Activated CD4-positive, alpha-beta T cell treated with anti-CD3 and anti-CD28 coated beads, Interleukin-2, amount 10 ng/mL, durations not matched to agents 24 days and 14 days (primary cell): ENCODE measurements at regions of chr11 and their contacts with region 1.

Region 1: GRCh38 chr11:103091801-103092524 is at the start of gene DCUN1D5:
- DNase-seq: peak; percentile 99
- H3K4me3 Mint-ChIP-seq: peak within 1 kb of the TSS; percentile 95
- H3K27ac Mint-ChIP-seq: peak within 1 kb of the TSS; percentile 96
- H3K4me1 Mint-ChIP-seq: peaks cover 23% of the 10 kb centered on the region
- H3K27me3 Mint-ChIP-seq: peaks cover 9% of the 10 kb centered on the region
- total RNA-seq, gene DCUN1D5: 87.1 TPM in 2 replicates

Region 2: DNA sequence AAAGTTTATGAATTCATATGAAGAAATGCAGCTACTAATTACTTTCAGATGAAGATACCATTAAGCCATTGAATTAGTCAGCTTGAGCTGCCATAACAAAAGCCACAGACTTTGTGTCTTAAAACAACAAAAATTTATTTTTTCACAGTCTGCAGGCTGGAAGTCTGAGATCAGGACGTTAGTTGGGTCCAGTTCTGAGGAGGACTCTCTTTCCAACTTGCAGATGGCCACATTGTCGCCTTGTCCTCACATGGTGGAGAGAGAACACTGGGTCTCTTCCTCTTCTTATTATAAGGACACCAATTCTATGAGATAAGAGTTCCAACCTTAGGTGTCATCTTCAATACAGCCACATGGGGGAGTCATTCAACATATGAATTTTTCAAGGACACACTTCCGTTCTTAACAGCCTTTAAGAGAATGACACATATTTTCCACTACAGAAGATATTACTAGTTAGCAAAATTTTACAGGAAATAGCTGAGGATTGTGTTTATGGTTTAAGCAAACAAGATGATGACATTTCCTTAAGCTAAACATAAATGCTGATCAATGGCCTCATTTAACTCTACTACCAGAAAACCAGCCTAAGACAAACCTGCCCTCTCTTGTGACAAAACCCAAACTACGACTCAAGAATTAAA is 56.0 kb before region 1 on chr11:
- intact Hi-C with region 1: loop called (anchors 1 kb)
- DNase-seq: peak; percentile 87
- H3K4me3 Mint-ChIP-seq: peak overlapping the region; percentile 18
- H3K27ac Mint-ChIP-seq: peak overlapping the region; percentile 79
- H3K4me1 Mint-ChIP-seq: peaks cover 18% of the 10 kb centered on the region
- H3K27me3 Mint-ChIP-seq: peaks cover 2% of the 10 kb centered on the region

Region 3: DNA sequence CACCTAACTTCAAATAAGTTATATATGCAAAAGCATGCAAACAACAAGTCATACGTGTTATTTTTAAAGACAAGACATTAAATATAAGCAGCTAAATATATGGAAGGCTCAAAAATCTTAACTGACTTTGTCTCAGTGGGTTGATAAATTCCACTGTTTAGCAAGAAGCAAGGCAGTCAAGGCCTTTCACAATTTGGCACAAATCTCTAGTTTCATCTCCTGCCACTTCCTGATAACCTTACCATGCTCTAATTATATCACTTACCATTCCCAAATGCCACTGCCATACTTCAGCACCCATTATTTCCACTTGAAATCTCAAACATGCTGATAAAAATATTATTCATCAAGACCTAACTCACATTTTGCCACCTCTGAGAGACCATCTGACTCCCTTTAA is 24.8 kb before region 1 on chr11:
- intact Hi-C with region 1: loop called (anchors 2 kb)
- DNase-seq: no peak
- H3K4me3 Mint-ChIP-seq: no peak overlapping the region
- H3K27ac Mint-ChIP-seq: no peak overlapping the region
- H3K4me1 Mint-ChIP-seq: peaks cover 34% of the 10 kb centered on the region
- H3K27me3 Mint-ChIP-seq: no peaks in the 10 kb centered on the region

Region 4: GRCh38 chr11:103079833-103080232 is 12.1 kb before region 1 on chr11:
- intact Hi-C with region 1: loop called (anchors 2 kb)
- DNase-seq: no peak
- H3K4me3 Mint-ChIP-seq: no peak overlapping the region
- H3K27ac Mint-ChIP-seq: no peak overlapping the region
- H3K4me1 Mint-ChIP-seq: no peaks in the 10 kb centered on the region
- H3K27me3 Mint-ChIP-seq: no peaks in the 10 kb centered on the region

Region 5: GRCh38 chr11:103108933-103109817 is 17.2 kb after region 1 on chr11 and contains the start of gene DYNC2H1:
- intact Hi-C with region 1: loop called (anchors 1 kb)
- DNase-seq: peak; percentile 97
- H3K4me3 Mint-ChIP-seq: peak within 1 kb of the TSS; percentile 95
- H3K27ac Mint-ChIP-seq: peak within 1 kb of the TSS; percentile 89
- H3K4me1 Mint-ChIP-seq: peaks cover 10% of the 10 kb centered on the region
- H3K27me3 Mint-ChIP-seq: peaks cover 35% of the 10 kb centered on the region
- total RNA-seq, gene DYNC2H1: 0.30 and 0.64 TPM in 2 replicates

Region 6: GRCh38 chr11:103420593-103420992 is 328.6 kb after region 1 on chr11:
- intact Hi-C with region 1: no loop called
- DNase-seq: no peak
- H3K4me3 Mint-ChIP-seq: no peak overlapping the region
- H3K27ac Mint-ChIP-seq: no peak overlapping the region
- H3K4me1 Mint-ChIP-seq: no peaks in the 10 kb centered on the region
- H3K27me3 Mint-ChIP-seq: no peaks in the 10 kb centered on the region